Activated CD4-positive, alpha-beta memory T cell treated with anti-CD3 and anti-CD28 coated beads, Interleukin-2, amount 10 ng/mL, durations not matched to agents 7 days and 5 days (primary cell): ENCODE measurements at regions of chr6 and their contacts with region 1.

Region 1: GRCh38 chr6:8085053-8085511 is 17.3 kb downstream of the EEF1E1 start:
- DNase-seq: no peak
- H3K4me3 Mint-ChIP-seq: no peak overlapping the region
- H3K27ac Mint-ChIP-seq: no peak overlapping the region
- H3K4me1 Mint-ChIP-seq: peaks cover 24% of the 10 kb centered on the region
- H3K27me3 Mint-ChIP-seq: no peaks in the 10 kb centered on the region

Region 2: GRCh38 chr6:8102122-8102958 is 17.3 kb after region 1 on chr6 and contains the start of gene EEF1E1:
- CTCF ChIA-PET with region 1: interaction called, 3 read pairs
- POLR2A ChIA-PET with region 1: interaction called, 15 read pairs
- DNase-seq: peak; percentile 97
- H3K4me3 Mint-ChIP-seq: peak within 1 kb of the TSS; percentile 94
- H3K27ac Mint-ChIP-seq: peak within 1 kb of the TSS; percentile 91
- H3K4me1 Mint-ChIP-seq: peaks cover 39% of the 10 kb centered on the region
- H3K27me3 Mint-ChIP-seq: peaks cover 13% of the 10 kb centered on the region
- total RNA-seq, gene EEF1E1: 29.8 to 30.0 TPM

Region 3: GRCh38 chr6:8113131-8113654 is 28.1 kb after region 1 on chr6:
- CTCF ChIA-PET with region 1: no interaction called
- POLR2A ChIA-PET with region 1: no interaction called
- DNase-seq: no peak
- H3K4me3 Mint-ChIP-seq: no peak overlapping the region
- H3K27ac Mint-ChIP-seq: no peak overlapping the region
- H3K4me1 Mint-ChIP-seq: no peaks in the 10 kb centered on the region
- H3K27me3 Mint-ChIP-seq: peaks cover 2% of the 10 kb centered on the region

Region 4: DNA sequence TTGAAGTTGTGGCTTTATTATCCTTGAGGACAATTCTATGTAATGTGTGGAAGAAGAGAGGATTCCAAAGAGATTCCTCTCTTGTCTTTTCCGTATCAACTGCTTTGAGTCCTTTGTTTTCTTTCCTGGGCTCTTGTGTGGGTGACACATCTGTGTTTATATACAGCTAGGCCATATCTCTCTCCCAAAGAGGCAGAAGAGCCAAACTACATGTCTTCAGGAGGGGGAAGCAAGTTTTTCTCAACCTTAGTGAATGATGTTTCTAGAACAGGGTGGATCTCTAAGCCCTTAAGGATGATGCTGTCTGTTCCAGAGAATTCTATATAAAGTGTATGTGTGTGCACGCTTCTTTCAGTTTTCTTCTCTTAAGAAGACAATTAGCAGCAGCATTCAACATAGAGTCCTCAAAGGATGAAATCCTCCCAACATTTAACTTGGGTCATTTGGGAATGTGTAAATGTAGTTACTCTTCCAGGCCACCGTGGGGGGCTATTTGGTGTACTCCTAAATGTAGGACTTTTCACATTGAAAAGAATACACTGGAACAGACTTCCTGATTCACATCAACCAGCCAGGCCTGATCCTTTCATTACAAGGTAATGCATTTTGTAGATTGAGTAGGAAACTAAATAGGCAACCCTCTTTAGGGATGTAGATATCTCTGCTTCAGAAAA is 110.1 kb after region 1 on chr6:
- CTCF ChIA-PET with region 1: no interaction called
- POLR2A ChIA-PET with region 1: no interaction called
- DNase-seq: no peak
- H3K4me3 Mint-ChIP-seq: no peak overlapping the region
- H3K27ac Mint-ChIP-seq: no peak overlapping the region
- H3K4me1 Mint-ChIP-seq: no peaks in the 10 kb centered on the region
- H3K27me3 Mint-ChIP-seq: peaks cover 4% of the 10 kb centered on the region